Activated CD8-positive, alpha-beta T cell treated with anti-CD3 and anti-CD28 coated beads, Interleukin-2, amount 10 ng/mL, durations not matched to agents 7 days and 5 days (primary cell): ENCODE measurements at regions of chr5 and their contacts with region 1.

Region 1: GRCh38 chr5:97142521-97143254 is at the start of gene LIX1:
- DNase-seq: peak; percentile 59
- ATAC-seq: peak; percentile 78
- H3K4me3 Mint-ChIP-seq: no peak within 1 kb of the TSS
- H3K27ac Mint-ChIP-seq: no peak within 1 kb of the TSS
- H3K4me1 Mint-ChIP-seq: no peaks in the 10 kb centered on the region
- H3K27me3 Mint-ChIP-seq: peaks cover 13% of the 10 kb centered on the region
- total RNA-seq, gene LIX1: not detected

Region 2: DNA sequence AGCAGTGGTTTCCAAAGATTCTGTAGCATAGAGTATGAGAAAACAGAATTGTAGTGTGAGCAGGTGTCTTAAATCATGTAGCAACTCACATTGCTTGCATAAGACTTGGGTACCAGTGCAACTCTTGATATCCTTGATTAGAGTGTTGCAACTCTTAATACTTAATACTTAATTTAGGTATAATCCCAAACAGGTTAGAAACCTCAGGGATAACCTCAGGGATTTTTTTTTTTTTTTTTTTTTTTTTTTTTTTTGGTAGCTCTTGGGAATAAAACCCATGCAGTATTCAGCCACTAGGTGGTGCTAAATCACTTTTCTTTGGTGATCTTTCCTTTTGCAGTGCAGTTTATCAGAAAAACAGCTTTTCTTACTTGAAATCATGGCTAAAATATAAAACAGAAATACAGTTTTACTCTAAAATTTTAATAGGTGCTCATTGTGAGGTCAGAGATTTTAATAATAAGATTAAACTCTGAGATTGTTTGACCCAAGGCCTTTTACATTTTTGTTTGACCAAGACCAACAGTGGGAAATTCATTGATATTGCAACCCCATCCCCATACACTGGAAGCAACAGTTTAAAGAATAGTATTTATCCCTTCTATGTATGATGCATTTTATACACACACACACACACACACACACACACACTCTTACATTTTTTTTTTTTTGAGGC is 390.2 kb before region 1 on chr5:
- CTCF ChIA-PET with region 1: interaction called, 20 read pairs
- POLR2A ChIA-PET with region 1: no interaction called
- DNase-seq: peak; percentile 67
- ATAC-seq: no peak
- H3K4me3 Mint-ChIP-seq: no peak overlapping the region
- H3K27ac Mint-ChIP-seq: no peak overlapping the region
- H3K4me1 Mint-ChIP-seq: no peaks in the 10 kb centered on the region
- H3K27me3 Mint-ChIP-seq: no peaks in the 10 kb centered on the region

Region 3: DNA sequence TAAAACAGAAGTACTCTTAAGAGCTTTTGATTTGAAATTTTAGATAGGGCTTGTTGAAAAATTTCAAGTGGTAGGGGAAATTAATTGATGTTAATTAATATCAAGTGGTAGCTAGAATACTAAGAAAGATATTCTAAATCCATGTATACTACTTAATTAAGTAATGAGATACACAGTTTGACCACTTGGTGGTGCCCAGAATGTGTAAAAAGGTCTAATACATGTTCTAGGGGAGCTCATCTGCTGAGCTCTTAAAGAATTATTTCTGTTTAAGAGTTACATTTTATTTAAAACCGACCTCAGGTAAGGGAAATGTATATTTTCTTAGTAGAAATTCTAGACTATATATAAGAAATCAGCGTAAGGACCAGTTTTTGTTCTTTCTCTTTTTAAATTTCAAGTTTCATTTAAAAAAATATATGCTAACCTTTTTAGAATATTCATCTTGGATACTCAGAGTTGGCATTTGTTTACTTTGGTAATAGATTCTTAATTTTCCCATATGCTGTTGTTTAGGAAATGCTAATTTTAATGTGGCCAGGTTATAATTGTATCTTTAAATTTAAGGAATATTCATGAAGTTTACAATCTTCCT is 145.3 kb before region 1 on chr5:
- CTCF ChIA-PET with region 1: interaction called, 44 read pairs
- POLR2A ChIA-PET with region 1: no interaction called
- DNase-seq: peak; percentile 51
- ATAC-seq: peak; percentile 54
- H3K4me3 Mint-ChIP-seq: no peak overlapping the region
- H3K27ac Mint-ChIP-seq: no peak overlapping the region
- H3K4me1 Mint-ChIP-seq: peaks cover 43% of the 10 kb centered on the region
- H3K27me3 Mint-ChIP-seq: no peaks in the 10 kb centered on the region

Region 4: DNA sequence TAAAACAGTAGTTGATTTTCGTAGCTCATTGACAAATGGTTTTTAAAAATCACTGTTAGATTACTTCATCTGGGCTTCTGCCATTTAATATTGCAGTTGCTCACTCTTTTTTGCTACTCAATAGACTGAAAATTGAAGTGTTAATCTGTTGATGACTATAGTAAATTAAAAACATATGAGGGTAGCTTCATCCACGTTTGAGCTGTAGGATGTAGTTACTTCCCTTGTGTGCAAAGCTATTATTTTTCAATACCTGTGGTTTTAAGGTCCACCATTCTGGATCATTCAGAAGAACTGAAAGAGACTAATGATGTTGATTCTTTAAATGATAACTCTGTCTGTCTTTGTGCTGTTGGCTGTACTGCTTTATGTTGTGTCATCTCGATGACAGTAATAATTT is 132.1 kb before region 1 on chr5:
- CTCF ChIA-PET with region 1: interaction called, 14 read pairs
- POLR2A ChIA-PET with region 1: no interaction called
- DNase-seq: no peak
- ATAC-seq: no peak
- H3K4me3 Mint-ChIP-seq: no peak overlapping the region
- H3K27ac Mint-ChIP-seq: peak overlapping the region; percentile 48
- H3K4me1 Mint-ChIP-seq: peaks cover 15% of the 10 kb centered on the region
- H3K27me3 Mint-ChIP-seq: no peaks in the 10 kb centered on the region

Region 5: DNA sequence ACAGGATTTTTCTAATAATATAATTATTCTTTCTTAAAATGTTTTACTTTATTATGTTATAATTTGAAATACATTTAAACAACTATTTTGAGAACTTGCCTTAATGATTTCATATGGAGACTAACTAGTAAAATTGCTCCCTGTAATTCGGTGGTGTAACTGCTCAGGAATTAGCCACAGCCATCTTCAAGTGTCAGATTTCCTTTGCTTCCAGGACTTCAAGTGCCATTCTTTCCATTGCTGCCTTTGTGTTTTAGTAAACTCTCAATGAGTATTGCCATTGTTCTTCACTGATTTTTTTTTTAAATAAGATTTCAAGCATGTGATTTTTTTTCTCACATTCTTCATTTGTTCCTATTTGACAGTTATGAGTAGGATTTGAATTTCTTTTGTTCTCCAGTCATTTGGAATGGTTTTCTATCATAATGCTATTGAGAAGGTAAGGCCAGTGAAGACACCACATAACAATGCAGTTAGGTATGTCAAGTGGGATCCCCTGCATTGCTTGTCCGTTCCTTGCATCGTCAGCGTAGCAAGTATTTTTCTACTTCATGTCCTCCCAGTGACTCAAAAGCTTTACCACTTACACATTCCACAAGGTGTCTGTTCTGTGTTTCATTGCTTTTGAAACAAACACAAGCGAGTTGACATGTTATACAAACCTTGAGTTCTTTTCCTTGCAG is 123.1 kb before region 1 on chr5:
- CTCF ChIA-PET with region 1: interaction called, 14 read pairs
- POLR2A ChIA-PET with region 1: no interaction called
- DNase-seq: no peak
- ATAC-seq: no peak
- H3K4me3 Mint-ChIP-seq: no peak overlapping the region
- H3K27ac Mint-ChIP-seq: no peak overlapping the region
- H3K4me1 Mint-ChIP-seq: peaks cover 36% of the 10 kb centered on the region
- H3K27me3 Mint-ChIP-seq: no peaks in the 10 kb centered on the region

Region 6: DNA sequence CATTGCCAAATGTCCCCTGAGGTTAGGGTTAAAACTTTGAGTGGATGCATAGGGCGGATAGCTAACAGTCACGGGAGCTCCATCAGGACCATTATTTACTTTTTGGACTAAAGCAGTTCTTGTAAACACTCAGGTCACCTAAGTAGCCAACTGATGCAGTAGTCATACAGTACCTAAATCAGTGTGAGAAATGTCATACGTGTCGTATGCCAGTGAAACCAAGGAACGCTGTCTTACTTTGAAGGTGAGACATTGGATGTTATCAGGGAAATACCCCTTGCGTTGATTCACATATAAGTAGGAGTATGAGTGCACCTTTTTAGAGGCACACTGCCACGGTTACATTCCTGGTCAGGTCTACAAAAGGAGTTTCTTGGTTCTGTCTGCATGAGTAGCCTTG is 104.9 kb before region 1 on chr5:
- CTCF ChIA-PET with region 1: interaction called, 11 read pairs
- POLR2A ChIA-PET with region 1: no interaction called
- DNase-seq: no peak
- ATAC-seq: no peak
- H3K4me3 Mint-ChIP-seq: no peak overlapping the region
- H3K27ac Mint-ChIP-seq: no peak overlapping the region
- H3K4me1 Mint-ChIP-seq: peaks cover 1% of the 10 kb centered on the region
- H3K27me3 Mint-ChIP-seq: no peaks in the 10 kb centered on the region

Region 7: GRCh38 chr5:97044052-97044451 is 98.6 kb before region 1 on chr5:
- CTCF ChIA-PET with region 1: interaction called, 12 read pairs
- POLR2A ChIA-PET with region 1: no interaction called
- DNase-seq: no peak
- ATAC-seq: no peak
- H3K4me3 Mint-ChIP-seq: no peak overlapping the region
- H3K27ac Mint-ChIP-seq: no peak overlapping the region
- H3K4me1 Mint-ChIP-seq: no peaks in the 10 kb centered on the region
- H3K27me3 Mint-ChIP-seq: peaks cover 11% of the 10 kb centered on the region